ENCODE measurements at regions of chr2 and their contacts with region 1.

Region 1: DNA sequence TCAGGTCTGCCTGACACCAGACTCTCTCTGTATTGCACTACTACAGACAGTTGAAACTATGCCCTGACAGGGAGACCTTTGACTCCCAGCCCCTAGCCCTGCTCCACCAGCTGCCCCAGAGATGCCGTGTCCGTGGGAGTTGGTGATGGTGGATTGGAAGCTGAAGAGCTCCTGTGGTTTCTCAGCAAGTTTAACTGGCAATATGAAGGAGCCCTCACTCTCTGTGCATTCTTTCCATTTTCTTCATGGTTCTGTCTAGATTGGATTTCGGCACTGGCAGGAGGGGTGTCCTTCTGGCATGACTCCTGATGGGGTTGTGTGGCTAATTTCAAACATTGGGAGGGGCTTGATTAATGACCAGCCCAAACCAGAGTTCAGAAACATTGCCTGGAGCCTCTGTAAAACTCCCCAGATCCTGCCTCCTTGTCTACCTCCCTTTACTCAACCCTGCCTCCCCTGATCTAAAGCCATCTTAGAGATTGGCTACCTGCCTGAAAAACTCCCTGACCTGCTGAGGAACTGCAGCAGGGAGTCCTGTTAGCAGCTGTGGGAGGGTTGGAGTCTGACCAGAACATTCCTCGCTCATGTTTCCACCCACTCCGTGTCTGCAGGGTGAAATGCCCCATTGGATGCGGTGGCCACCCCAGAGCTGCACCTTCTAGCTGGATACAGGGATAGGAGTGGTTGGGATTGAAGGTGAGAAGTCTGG is 206.9 kb upstream of the SPRED2 start:
- DNase-seq: no peak
- H3K4me3 ChIP-seq: no peak overlapping the region
- H3K27me3 ChIP-seq: peaks cover 8% of the 10 kb centered on the region
- CTCF ChIP-seq: no peak

Region 2: GRCh38 chr2:65649811-65650589 is 10.7 kb after region 1 on chr2:
- CTCF ChIA-PET with region 1: interaction called, 10 read pairs
- POLR2A ChIA-PET with region 1: no interaction called
- DNase-seq: no peak
- H3K4me3 ChIP-seq: no peak overlapping the region
- H3K27me3 ChIP-seq: peaks cover 5% of the 10 kb centered on the region
- CTCF ChIP-seq: no peak

Region 3: DNA sequence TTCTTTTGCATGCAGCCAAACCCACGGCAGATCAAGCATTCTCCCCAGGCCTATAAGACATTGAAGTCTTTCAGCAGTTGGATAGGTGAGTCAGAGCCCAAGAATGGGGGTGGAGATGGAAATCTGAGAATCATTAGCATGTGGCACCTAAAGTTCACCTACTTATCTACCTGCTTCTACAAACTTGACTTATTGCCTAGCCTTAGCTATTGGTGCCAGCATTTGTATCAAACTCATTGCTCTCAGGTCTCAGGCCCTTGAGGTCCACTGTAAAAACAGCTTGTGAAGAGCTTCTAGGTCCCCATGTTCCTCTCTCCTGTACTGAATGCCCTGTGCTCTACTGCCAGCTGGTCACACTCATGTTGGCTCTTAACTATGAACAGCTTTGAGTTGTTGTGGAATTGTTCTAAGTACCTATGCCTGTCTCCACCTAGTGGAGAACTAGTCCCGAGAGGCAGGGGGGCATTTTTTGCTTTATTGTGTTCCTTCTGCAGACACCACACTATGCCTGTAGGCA is 71.5 kb after region 1 on chr2:
- CTCF ChIA-PET with region 1: interaction called, 11 read pairs
- POLR2A ChIA-PET with region 1: no interaction called
- DNase-seq: no peak
- H3K4me3 ChIP-seq: no peak overlapping the region
- H3K27me3 ChIP-seq: no peaks in the 10 kb centered on the region
- CTCF ChIP-seq: peak; percentile 41; the same call in 1 of the 2 replicates

Region 4: DNA sequence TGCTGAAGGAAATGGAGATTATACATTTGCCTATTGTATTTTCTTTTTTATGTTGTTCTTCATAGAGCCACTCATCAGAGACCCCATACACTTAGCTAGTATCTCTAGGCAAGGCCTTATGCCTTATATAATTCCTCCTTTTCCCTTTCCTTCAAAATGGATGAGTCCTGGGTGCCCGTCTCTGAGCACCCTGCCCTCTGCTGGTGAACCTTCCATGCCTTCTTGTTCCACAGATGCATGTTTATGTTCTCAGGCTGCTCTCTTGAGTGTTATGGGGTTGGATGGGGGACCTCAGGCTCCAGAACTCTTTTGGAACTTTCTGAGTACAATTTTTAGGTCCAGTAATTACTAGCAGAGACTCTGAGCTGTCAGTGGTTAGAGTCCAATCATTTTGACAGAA is 161.7 kb after region 1 on chr2:
- CTCF ChIA-PET with region 1: interaction called, 14 read pairs
- POLR2A ChIA-PET with region 1: no interaction called
- DNase-seq: no peak
- H3K4me3 ChIP-seq: no peak overlapping the region
- H3K27me3 ChIP-seq: no peaks in the 10 kb centered on the region
- CTCF ChIP-seq: peak; percentile 59

Region 5: GRCh38 chr2:66364495-66365333 is 725.4 kb after region 1 on chr2:
- CTCF ChIA-PET with region 1: no interaction called
- POLR2A ChIA-PET with region 1: no interaction called
- DNase-seq: peak; percentile 52
- H3K4me3 ChIP-seq: no peak overlapping the region
- H3K27me3 ChIP-seq: peaks cover 24% of the 10 kb centered on the region
- CTCF ChIP-seq: no peak